Activated naive CD4-positive, alpha-beta T cell treated with anti-CD3 and anti-CD28 coated beads for 36 hours (primary cell): ENCODE measurements at regions of chr7 and their contacts with region 1.

Region 1: GRCh38 chr7:30612658-30613265 is 18.1 kb downstream of the GARS1 start:
- DNase-seq: no peak
- H3K4me3 Mint-ChIP-seq: no peak overlapping the region
- H3K27ac Mint-ChIP-seq: peak overlapping the region; percentile 66
- H3K4me1 Mint-ChIP-seq: peaks cover 34% of the 10 kb centered on the region
- H3K27me3 Mint-ChIP-seq: no peaks in the 10 kb centered on the region

Region 2: DNA sequence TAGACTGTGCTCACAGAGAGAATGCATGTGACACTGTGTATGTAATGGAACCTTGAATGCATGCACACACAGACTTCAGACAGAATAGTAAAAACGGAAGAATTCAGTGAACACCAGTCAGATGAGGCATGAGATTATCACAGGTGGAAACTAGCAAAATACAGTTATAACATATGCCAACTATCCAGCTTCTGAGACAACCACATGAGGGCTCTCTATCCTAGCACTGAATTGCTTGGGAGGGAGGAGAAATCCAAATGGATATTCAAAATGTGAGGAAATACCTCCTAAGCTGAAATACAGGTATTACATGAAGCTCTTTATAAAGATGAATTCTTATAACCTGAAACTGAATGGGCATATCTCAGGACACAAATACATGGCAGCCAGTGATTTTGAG is 12.5 kb after region 1 on chr7:
- CTCF ChIA-PET with region 1: no interaction called
- intact Hi-C with region 1: loop called (anchors 2 kb)
- DNase-seq: no peak
- H3K4me3 Mint-ChIP-seq: no peak overlapping the region
- H3K27ac Mint-ChIP-seq: no peak overlapping the region
- H3K4me1 Mint-ChIP-seq: no peaks in the 10 kb centered on the region
- H3K27me3 Mint-ChIP-seq: no peaks in the 10 kb centered on the region